Dendritic cell treated with granulocyte-macrophage colony-stimulating factor and Interleukin-4, amounts not matched to agents 40 ng/mL and 50 ng/mL, for 4 days (primary cell): ENCODE measurements at regions of chr12 and their contacts with region 1.

Region 1: DNA sequence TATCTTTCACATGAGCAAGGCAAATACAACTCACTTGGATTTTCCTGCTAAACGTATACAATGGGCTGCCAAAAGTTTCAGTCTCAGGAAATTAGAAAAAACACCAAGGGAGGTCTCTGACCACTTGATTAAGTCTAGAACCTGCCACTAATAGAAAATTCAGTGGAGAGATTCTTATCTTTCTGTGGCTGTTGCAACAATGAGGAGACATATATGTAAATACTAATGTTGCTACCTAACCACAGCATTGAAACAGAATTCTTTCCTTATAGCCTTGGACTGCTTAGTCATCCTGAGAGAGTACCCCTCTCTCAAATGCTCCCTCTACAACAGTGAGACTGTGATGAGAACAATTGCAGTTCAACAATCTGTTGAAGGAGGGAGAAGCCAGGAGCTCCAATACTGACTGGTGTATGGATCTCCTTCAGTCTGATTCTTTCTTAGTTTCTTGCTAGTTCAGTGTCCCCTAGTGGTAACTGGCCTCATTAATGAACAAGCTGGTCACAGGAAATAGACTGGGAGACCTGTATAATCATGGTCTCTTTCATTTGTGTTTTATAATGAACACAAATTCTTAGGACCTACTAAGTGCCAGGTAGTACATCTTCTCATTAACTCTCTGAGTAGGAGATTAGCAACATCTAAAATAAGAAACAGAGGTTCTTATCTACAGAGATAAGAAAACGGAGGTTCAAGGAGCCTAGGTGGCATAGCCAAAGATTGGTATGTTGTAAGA is 164.5 kb downstream of the SLC38A4 start:
- H3K4me3 Mint-ChIP-seq: no peak overlapping the region
- H3K27ac Mint-ChIP-seq: peak overlapping the region; percentile 57
- H3K4me1 Mint-ChIP-seq: peaks cover 33% of the 10 kb centered on the region
- H3K27me3 Mint-ChIP-seq: no peaks in the 10 kb centered on the region

Region 2: DNA sequence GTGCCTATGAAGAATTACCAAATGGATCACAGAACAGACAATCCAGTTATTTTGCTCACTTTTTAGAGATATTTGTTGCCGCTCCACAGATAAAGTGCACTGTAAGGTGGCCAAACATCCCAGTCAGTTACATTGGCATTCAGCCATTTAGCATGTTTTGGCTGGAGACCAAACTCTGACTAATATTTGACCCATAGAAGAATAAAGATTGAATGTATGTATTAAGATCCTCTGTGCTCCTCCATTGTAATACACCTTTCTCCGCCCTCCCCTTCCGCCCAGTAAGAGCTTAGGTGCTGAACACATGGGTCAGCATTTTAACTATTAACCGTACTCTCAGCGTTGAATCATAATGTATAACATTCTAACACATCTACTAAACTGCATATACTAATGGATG is 1282.0 kb before region 1 on chr12:
- intact Hi-C with region 1: no loop called
- H3K4me3 Mint-ChIP-seq: no peak overlapping the region
- H3K27ac Mint-ChIP-seq: no peak overlapping the region
- H3K4me1 Mint-ChIP-seq: no peaks in the 10 kb centered on the region
- H3K27me3 Mint-ChIP-seq: no peaks in the 10 kb centered on the region

Region 3: GRCh38 chr12:46153268-46153872 is 507.9 kb before region 1 on chr12:
- intact Hi-C with region 1: loop called (anchors 10 kb)
- H3K4me3 Mint-ChIP-seq: no peak overlapping the region
- H3K27ac Mint-ChIP-seq: no peak overlapping the region
- H3K4me1 Mint-ChIP-seq: peaks cover 5% of the 10 kb centered on the region
- H3K27me3 Mint-ChIP-seq: peaks cover 3% of the 10 kb centered on the region

Region 4: GRCh38 chr12:46364777-46365580 is 296.3 kb before region 1 on chr12:
- intact Hi-C with region 1: loop called (anchors 5 kb)
- H3K4me3 Mint-ChIP-seq: no peak overlapping the region
- H3K27ac Mint-ChIP-seq: no peak overlapping the region
- H3K4me1 Mint-ChIP-seq: peaks cover 46% of the 10 kb centered on the region
- H3K27me3 Mint-ChIP-seq: no peaks in the 10 kb centered on the region